GM18951 (cell line): ENCODE measurements at regions of chr6 and their contacts with region 1.

Region 1: DNA sequence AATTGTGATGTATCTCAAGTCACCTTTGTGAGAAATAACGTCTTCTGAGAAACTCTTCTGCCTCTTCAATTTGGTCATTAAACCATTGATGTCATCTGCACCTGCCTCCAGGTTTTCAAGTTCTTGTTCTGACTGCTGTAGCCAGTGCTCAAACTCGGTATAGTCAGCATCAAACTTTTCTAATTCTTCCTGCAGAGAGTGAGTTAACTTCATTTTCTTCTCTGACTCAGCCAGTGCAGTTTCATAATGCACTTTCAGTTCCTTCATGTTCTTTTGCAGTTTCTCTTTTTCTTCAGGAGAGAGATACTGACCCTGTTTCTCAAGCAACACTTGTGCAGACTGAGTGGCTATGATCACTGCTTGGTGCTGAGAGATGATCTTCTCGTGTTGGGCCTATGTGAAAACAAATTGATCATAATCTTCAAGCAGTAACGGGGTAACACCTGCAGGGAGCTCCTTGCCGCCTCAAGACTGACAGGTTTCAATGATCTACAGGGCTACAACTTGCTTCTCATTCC is 48.8 kb downstream of the DST start:
- POLR2A ChIP-seq: no peak

Region 2: GRCh38 chr6:56359201-56359899 is 234.5 kb before region 1 on chr6:
- in situ Hi-C with region 1: loop called (anchors 5 kb)
- POLR2A ChIP-seq: no peak

Region 3: GRCh38 chr6:57469072-57469471 is 875.2 kb after region 1 on chr6:
- in situ Hi-C with region 1: no loop called
- POLR2A ChIP-seq: no peak